K562 (cell line): ENCODE measurements at regions of chr7 and their contacts with region 1.

Region 1: DNA sequence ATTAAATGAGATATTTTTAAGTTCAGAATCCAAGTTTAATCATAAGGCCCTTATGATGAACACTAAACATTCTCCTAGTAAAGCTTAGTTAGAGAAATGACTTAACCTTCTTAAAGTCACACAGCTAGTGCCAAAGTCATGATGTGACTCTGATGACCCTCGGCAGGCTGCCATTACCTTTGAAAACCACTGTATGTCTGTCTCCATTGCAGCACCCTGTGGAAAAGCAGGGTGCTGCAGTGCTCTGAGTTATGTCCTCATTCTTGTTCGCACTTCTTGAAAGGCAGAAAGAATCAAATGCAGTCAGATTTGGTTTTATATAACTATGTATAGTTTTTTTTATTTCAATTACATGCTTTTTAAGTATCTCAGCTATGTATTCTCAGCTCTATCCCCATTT is 105.0 kb downstream of the PHTF2 start:
- DNase-seq: peak in 2 of 4 experiments; percentile 62 to 73
- ATAC-seq: peak; percentile 88
- H3K4me3 ChIP-seq: no peak overlapping the region
- H3K27ac ChIP-seq: no peak overlapping the region
- H3K4me1 ChIP-seq: peaks cover 5 to 16% of the 10 kb centered on the region in 2 experiments; a peak in 3 of 5 replicates
- H3K27me3 ChIP-seq: no peaks in the 10 kb centered on the region
- CTCF ChIP-seq: peak; percentile 56 to 73 (median 68)
- EP300 ChIP-seq: no peak
- POLR2A ChIP-seq: no peak
- RAD21 ChIP-seq: peak; percentile 42 to 72

Region 2: DNA sequence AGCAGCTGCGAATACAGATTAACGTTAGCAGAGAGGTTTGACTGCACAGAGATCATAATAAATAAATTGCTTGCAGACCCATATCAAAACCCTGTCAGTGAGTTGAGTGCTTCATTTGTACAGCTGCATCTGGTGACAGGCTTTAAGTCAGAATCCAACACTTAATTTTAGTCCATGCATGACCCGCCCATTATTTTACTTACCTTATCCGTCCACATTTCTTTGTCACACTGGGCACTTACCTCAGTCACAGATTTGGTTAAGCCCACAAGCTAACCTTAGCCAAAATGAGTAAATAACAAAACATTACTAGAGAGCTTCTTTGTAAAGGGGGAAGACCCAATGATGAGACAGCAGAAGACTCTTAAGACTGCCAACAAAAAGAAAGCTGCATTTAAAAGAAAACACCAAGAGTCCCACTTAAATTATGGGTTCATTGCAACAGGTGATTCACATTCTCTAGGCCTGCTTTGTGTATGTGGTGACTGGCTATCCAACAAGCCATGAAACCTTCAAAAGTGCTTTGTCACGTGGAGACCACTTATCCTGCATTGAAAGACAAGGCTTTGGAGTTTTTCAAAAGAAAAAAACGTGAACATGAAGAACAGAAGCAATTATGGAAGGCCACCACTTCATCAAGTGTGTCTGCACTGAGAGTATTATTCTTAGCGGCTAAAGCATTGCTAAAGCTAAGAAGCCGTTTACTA is 72.8 kb before region 1 on chr7:
- CTCF ChIA-PET with region 1: no interaction called
- POLR2A ChIA-PET with region 1: no interaction called
- in situ Hi-C with region 1: no loop called
- intact Hi-C with region 1: loop called (anchors 5 kb)
- DNase-seq: peak in 1 of 4 experiments; percentile 62
- ATAC-seq: peak; percentile 55
- H3K4me3 ChIP-seq: no peak overlapping the region
- H3K27ac ChIP-seq: peak overlapping the region; percentile 58; the same call in 2 of the 3 replicates
- H3K4me1 ChIP-seq: peaks cover 4 to 51% of the 10 kb centered on the region in 2 experiments; a peak in 4 of 5 replicates
- H3K27me3 ChIP-seq: no peaks in the 10 kb centered on the region
- CTCF ChIP-seq: no peak
- EP300 ChIP-seq: no peak
- POLR2A ChIP-seq: no peak
- RAD21 ChIP-seq: no peak